GM18951 (cell line): ENCODE measurements at regions of chr7 and their contacts with region 1.

Region 1: DNA sequence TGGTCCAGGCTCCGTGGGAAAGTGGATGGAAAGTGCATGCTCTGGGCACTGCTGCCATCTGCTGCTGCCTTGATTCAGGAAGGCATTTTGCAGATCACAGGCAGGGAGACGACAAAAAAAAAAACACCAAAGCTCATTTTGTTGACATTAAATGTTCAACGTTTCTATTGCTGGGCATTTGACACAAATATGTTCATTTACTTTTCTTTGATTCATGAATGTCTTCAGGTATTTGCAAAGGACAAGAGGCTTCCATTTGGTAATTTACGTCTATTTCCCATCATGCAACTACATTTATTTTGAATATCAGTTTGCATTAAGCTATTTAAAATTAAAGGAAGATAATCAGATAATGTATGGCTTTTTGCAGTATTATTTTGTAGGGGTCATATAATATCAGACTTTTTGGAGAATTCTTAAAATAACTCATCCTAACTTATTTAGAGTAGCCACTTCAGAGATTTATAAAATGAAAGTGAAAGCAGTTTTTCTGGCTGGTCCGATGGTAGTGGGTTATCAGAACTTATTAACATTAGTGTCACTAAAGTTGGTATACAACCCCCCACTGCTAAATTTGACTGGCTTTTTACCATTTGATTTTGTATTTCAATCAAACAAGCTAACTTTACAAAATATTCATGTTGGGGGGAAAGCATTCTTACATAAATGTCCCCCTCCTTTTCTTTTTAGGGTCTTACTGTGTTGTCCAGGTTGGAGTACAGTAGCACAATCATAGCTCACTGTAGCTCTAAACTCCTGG is 65.3 kb downstream of the PDIA4 start:
- POLR2A ChIP-seq: no peak

Region 2: DNA sequence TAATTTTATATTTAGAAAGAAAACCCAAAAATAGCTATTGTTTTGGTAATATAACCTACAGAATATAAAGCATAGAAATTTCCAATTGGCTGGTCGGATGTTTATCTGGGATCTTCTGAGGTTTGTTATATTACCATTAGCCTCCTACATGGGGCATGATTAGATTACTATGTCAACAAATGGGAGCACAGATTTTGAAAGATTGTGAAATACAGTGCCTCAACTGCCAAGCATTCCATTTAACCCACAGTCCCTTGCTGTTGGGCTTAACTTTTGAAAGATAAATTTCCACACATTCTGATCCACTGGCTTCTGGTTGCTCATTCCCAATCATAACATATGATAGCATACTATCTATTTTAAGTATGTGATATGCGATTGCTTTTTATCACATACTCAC is 827.9 kb before region 1 on chr7:
- in situ Hi-C with region 1: no loop called
- POLR2A ChIP-seq: no peak

Region 3: DNA sequence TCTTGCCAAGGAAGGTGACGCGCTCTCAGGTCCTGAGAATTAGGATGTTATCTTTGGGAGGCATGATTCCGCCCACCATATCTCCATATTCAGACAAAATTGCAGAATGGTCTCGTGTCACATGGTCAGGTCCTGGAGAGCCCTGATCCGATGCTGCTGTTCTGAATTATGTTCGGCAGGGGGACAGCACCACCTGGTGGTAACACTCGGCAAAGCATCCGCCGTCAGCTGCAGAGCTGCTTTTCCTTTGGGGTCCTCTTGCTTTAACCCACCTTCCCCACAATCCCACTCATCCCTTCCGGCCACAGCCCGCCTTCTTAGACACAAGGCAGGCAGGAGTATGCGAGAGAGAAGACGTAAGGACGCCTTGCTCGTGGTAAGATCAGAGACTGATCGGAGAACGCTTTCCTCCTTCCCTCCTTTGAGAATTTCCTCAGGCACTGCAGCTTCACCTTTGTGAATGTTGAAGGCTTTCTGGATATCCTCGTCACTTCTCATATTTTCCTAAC is 700.2 kb before region 1 on chr7:
- in situ Hi-C with region 1: loop called (anchors 10 kb)
- POLR2A ChIP-seq: no peak

Region 4: DNA sequence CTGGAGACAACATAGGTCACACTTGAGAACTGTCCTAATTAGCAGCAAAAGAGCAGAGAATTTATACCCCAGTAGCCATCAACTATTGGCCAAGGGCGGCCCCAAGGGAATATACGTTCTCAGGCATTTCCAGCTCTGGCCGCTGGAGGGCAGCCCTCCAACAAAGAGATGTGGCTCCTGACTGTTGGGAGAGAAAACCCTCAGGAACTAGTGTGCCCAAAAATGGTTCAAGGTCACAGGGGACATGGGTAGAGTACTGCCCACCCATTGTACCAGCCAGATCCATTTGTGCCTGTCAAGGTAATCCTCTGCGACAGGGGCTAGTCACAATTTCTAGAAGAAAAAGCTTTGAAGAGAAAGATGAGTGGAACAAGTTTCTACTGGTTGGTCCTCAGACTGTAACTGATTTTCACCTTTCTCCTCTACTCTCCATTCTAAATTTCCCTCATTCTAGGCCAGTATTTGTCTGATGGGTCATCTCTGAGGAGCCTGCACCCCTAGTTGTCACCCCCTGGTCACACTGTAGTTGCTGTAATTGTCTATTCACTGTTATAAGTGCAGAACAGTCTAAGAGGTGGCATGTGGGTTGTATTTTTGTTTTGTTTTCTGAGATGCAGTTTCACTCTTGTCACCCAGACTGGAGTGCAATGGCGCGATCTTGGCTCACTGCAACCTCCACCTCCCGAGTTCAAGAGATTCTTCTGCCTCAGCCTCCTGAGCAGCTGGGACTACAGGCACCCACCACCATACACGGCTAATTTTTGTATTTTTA is 387.2 kb before region 1 on chr7:
- in situ Hi-C with region 1: loop called (anchors 10 kb)
- POLR2A ChIP-seq: no peak

Region 5: DNA sequence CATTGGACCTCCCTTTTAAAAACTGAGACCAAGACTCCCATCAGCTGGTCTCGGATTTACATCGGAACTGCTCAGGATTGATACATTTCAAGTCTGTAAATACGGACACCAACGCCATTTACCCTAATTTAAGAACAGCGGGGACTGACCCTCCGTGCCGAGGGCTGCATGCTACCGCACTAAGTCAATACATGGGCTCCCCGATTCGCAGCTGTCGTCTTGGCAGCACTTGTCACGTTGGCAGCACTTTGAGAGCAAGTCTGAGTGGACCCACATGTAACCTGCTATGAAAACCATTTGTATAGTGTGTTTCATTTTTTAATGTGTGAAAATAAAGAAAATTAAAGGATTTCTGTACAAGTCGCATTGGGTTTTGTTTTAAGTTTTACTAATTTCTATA is 162.3 kb before region 1 on chr7:
- in situ Hi-C with region 1: no loop called
- POLR2A ChIP-seq: no peak

Region 6: DNA sequence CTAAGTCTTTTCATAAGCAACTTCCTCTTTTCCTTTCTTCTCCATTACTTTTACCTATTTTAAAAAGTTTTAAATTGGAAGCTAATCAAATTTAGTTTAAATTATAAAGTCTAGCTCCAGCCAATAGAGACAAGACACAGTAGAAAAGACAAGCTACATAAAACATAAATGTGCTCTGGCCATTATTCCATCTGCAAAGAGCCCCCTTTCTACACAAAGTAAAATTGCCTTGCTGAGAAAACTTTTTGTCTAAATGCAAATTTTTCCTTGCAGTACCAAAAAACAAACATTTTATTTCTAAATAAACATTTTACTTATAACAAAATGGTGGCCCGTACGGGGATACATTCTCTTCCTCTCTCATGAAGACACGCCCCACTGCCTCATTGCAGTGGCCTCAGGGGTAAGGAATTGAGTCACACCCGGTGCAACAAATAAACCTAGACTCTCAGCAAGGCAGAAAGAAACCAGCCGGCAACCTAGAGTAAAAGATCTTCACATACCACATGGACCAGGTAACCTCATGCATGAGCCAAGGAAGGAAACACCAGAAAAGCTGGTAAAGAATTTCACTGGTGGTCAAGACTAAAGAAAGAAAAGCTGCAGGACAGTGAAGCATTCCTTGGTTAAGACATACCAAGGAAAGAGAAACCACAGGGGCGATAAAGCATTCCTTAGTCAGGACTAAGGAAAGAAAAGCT is 606.2 kb after region 1 on chr7:
- in situ Hi-C with region 1: no loop called
- POLR2A ChIP-seq: no peak